ENCODE measurements at regions of chr10 and their contacts with region 1.

Region 1: GRCh38 chr10:102835007-102835482 is 2.2 kb downstream of the CYP17A1 start:
- DNase-seq: peak; percentile 63
- H3K4me3 Mint-ChIP-seq: no peak overlapping the region
- H3K27ac Mint-ChIP-seq: no peak overlapping the region
- H3K4me1 Mint-ChIP-seq: peaks cover 7% of the 10 kb centered on the region
- H3K27me3 Mint-ChIP-seq: peaks cover 12% of the 10 kb centered on the region

Region 2: GRCh38 chr10:102503281-102504220 is 331.5 kb before region 1 on chr10 and contains the start of gene SUFU:
- intact Hi-C with region 1: no loop called
- DNase-seq: peak; percentile 97
- H3K4me3 Mint-ChIP-seq: no peak within 1 kb of the TSS
- H3K27ac Mint-ChIP-seq: peak within 1 kb of the TSS; percentile 84
- H3K4me1 Mint-ChIP-seq: peaks cover 25% of the 10 kb centered on the region
- H3K27me3 Mint-ChIP-seq: no peaks in the 10 kb centered on the region
- total RNA-seq, gene SUFU: 9.3 and 11.6 TPM in 2 replicates

Region 3: DNA sequence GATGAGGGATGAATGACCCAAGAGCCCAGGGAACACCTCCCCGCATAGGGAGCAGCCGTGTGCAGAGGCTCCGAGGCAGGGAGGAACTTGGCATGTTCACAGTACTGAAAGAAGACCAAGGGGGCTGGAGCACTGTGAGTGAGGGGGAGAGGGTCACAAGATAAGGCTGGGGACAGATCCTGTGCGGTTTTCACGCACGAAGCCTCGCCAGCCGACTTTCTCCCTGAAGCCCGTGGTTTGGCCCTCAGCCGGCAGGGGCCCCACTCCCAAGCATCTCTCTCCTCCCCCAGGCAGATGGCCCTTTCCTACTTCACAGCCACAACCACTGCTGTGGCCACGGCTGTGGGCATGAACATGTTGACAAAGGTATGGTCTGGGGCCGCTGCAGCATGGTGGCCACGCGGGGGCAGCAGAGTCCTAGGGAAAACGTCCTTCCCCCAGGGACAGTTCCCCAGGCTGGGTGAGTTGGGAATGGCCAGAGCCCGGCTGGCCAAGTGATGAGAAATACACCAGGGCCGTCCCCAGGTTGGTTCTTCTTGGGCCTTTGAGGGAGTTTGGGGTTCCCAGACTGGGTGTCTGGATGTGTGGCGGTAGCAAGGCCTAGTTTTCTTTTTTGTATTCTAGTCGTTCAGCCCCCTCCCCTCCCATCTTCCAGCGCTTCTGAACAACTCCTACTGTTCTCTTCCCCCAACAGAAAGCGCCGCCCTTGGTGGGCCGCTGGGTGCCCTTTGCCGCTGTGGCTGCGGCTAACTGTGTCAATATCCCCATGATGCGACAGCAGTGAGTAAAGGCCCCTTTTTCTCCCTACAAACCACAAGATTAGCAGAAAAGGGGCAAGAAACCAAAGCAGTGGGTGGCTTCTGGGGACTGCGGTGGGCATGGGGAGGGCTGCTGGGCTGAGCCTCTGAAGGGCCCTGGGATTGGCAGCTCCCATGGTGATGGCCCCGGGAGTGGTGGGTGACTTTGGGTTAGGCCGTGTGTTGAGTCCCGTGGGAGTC is 105.7 kb before region 1 on chr10:
- intact Hi-C with region 1: loop called (anchors 5 kb)
- DNase-seq: peak; percentile 41
- H3K4me3 Mint-ChIP-seq: no peak overlapping the region
- H3K27ac Mint-ChIP-seq: no peak overlapping the region
- H3K4me1 Mint-ChIP-seq: peaks cover 10% of the 10 kb centered on the region
- H3K27me3 Mint-ChIP-seq: no peaks in the 10 kb centered on the region

Region 4: DNA sequence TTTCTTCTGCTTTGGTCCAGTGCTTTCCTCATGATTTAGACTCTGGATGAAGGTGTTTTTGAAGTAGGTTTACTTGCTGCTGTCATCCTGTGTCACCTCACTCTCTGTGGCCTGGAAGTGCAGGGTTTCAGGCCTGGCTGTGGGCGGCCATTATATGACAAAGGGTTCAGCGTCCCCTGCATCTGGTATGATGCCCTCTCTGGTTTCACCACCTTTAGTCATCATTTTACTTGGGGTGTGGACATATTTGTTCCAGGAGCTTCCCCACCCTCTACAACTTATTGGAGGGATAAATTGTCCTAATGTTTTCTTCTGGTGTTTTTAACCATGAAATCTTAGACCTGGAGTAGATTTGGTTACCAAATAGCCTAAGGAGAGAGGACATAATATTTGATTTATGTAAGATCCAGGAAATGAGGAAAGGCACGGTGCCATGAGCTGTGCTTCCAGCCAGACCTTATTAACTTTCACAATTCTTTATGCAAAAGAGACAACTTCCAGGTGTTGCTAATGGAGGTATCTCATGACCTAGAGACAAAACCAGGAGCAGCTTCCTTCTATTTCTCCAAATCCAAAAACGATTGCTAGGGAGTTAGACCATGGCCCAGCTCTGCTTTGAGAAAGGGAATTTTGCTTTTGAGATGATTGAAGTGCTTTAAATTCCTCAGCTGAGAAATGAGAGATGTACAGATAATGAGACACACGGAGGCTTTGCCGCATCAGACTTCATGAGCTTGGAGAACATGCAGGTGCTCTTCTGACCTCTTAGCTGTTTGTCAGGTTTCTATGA is 70.5 kb before region 1 on chr10:
- intact Hi-C with region 1: no loop called
- DNase-seq: no peak
- H3K4me3 Mint-ChIP-seq: no peak overlapping the region
- H3K27ac Mint-ChIP-seq: no peak overlapping the region
- H3K4me1 Mint-ChIP-seq: peaks cover 28% of the 10 kb centered on the region
- H3K27me3 Mint-ChIP-seq: no peaks in the 10 kb centered on the region

Region 5: DNA sequence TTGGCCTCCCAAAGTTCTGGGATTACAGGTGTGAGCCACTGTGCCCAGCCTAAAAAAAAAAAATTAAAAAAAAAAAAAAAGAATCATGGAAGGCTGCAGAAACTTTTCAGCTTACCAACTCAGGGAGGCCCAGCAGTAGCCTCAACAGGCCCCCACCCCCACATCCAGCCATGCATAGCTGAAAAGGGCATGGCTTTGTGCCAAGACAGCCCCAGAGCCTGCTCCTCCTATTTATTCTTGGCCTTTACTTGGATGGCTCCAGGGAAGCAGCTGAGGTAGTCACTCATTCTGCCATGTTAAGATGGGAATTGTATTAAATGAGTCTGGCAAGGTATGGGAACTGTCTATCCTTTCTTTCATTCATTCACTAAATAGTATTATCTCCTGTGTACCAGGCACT is 69.3 kb after region 1 on chr10:
- intact Hi-C with region 1: loop called (anchors 1 kb)
- DNase-seq: no peak
- H3K4me3 Mint-ChIP-seq: no peak overlapping the region
- H3K27ac Mint-ChIP-seq: no peak overlapping the region
- H3K4me1 Mint-ChIP-seq: no peaks in the 10 kb centered on the region
- H3K27me3 Mint-ChIP-seq: peaks cover 2% of the 10 kb centered on the region

Region 6: DNA sequence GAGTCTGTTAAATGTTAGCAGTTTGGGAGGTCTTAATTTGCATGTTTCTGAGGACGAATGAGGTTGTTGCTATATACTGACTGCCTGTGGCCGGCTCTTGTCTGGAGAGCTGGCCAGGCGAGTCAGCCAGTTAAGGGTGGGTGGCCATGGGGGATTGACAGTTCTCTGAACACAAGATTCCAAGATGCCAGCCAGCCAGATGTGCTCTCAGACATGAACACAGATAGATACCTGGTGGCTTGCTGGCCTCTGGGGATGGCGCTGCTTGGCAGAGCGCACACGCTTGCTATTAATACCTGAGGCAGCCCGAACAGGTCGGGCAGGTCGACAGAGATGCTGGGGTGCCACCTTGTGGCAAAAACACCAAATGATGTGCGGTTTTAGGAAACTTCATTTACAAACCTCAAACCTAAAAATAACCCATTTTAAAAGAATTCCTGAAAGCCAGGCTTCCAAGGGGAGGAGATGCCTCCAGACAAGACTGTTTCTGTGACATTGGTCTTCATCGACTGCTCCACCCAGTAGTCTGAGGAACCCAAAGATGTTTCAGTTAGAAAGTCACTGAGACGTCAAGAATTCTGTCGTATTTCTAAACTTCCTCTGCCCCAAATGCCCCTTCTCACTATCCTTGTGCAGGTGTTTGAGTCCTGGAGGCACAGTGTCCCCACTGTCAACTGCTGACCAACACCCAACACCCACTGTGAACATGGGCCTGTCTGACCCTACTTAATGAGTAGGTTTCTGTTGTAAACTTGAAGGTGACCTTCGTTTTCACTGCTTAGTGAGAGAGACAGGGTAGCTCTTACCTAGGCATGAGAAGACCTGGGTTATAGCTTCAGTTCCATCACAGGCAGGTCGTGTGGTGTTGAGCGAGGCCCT is 234.6 kb after region 1 on chr10:
- intact Hi-C with region 1: loop called (anchors 1 kb)
- DNase-seq: peak; percentile 54
- H3K4me3 Mint-ChIP-seq: no peak overlapping the region
- H3K27ac Mint-ChIP-seq: peak overlapping the region; percentile 57
- H3K4me1 Mint-ChIP-seq: peaks cover 23% of the 10 kb centered on the region
- H3K27me3 Mint-ChIP-seq: peaks cover 2% of the 10 kb centered on the region

Region 7: GRCh38 chr10:103244663-103245271 is 409.7 kb after region 1 on chr10:
- intact Hi-C with region 1: loop called (anchors 1 kb)
- DNase-seq: peak; percentile 50
- H3K4me3 Mint-ChIP-seq: no peak overlapping the region
- H3K27ac Mint-ChIP-seq: no peak overlapping the region
- H3K4me1 Mint-ChIP-seq: peaks cover 31% of the 10 kb centered on the region
- H3K27me3 Mint-ChIP-seq: peaks cover 6% of the 10 kb centered on the region

Region 8: GRCh38 chr10:103333925-103334520 is 499.0 kb after region 1 on chr10:
- intact Hi-C with region 1: loop called (anchors 1 kb)
- DNase-seq: no peak
- H3K4me3 Mint-ChIP-seq: no peak overlapping the region
- H3K27ac Mint-ChIP-seq: no peak overlapping the region
- H3K4me1 Mint-ChIP-seq: no peaks in the 10 kb centered on the region
- H3K27me3 Mint-ChIP-seq: no peaks in the 10 kb centered on the region

Region 9: DNA sequence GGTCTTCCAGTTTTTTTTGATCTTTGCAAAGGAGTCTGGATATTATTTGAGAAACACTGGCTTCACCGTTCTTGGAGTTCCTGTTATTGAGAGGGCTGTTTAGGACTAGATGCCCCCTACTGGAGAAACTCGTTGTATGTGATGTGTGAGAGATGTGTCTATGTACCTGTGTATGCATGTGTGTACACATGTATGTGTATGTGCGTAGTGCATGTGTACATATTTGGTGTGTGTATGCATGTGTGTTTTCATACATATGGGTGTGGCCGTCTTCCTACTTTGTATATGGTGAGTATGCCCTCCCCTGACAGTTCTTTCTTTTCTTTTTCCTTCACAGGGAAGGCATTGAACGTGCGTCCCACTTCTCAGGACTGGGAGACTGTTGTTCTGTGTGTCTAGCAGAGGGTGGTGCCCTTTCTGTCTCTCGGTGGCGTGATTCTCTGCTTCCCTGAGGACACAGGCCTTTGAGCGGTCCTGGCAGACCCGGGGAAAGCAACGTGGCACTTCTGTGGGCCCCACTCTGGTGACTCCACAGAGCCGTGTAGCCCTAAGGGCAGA is 647.0 kb after region 1 on chr10:
- intact Hi-C with region 1: loop called (anchors 2 kb)
- DNase-seq: peak; percentile 41
- H3K4me3 Mint-ChIP-seq: no peak overlapping the region
- H3K27ac Mint-ChIP-seq: no peak overlapping the region
- H3K4me1 Mint-ChIP-seq: peaks cover 19% of the 10 kb centered on the region
- H3K27me3 Mint-ChIP-seq: peaks cover 6% of the 10 kb centered on the region

Measured in activated T-helper 1 cell treated with anti-CD3 and anti-CD28 coated beads, Interleukin-12 subunit alpha, Interleukin-12 subunit beta, Interleukin-2, Interleukin-4 antibody, amounts not matched to agents 30 ng/mL and 10 ng/mL and 1 ng/mL, durations not matched to agents 14 hours and 24 hours and 36 hours (primary cell).